ENCODE measurements at regions of chr4 and their contacts with region 1.

Region 1: DNA sequence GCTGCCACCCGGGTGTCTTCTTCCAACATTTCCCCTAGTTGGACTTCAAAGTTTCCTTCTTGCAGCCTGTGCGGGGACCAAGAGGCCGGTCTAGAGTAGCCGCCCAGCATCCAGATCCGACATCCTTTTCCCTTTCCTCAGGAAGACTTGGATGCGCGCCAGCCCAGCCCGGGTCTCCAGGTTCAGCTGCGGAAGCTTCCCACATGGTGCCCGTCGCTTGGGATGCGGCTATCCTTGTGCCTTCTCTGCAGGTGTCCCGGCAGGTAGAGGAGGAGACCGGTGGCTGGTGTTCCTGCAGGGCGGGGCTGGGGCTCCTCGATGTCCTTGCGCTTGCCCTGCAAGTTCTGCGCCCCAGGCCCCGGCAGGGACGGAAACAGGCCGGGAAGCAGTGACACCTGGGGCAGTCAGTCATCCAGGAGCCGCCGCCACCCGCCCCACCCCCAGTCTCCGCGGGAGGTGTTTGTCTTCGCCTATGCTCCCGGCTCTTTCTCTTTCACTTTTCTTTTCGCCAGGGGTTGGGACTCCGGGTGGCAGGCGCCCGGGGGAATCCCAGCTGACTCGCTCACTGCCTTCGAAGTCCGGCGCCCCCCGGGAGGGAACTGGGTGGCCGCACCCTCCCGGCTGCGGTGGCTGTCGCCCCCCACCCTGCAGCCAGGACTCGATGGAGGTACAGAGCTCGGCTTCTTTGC is at the start of gene IL15:
- DNase-seq: peak; percentile 85
- ATAC-seq: peak; percentile 90
- H3K4me3 Mint-ChIP-seq: peak within 1 kb of the TSS; percentile 86
- H3K27ac Mint-ChIP-seq: peak within 1 kb of the TSS; percentile 67
- H3K4me1 Mint-ChIP-seq: peaks cover 18% of the 10 kb centered on the region
- H3K27me3 Mint-ChIP-seq: peaks cover 20% of the 10 kb centered on the region
- total RNA-seq, gene IL15: 0.37 to 1.1 TPM

Region 2: GRCh38 chr4:141705747-141706377 is 69.6 kb after region 1 on chr4:
- CTCF ChIA-PET with region 1: no interaction called
- POLR2A ChIA-PET with region 1: no interaction called
- intact Hi-C with region 1: loop called in 1 of 2 experiments (anchors 2 kb)
- DNase-seq: no peak
- ATAC-seq: no peak
- H3K4me3 Mint-ChIP-seq: no peak overlapping the region
- H3K27ac Mint-ChIP-seq: no peak overlapping the region
- H3K4me1 Mint-ChIP-seq: no peaks in the 10 kb centered on the region
- H3K27me3 Mint-ChIP-seq: peaks cover 2% of the 10 kb centered on the region

Measured in activated CD4-positive, alpha-beta T cell treated with anti-CD3 and anti-CD28 coated beads for 36 hours (primary cell).